CD4-positive, alpha-beta memory T cell (primary cell): ENCODE measurements at regions of chr13 and their contacts with region 1.

Region 1: DNA sequence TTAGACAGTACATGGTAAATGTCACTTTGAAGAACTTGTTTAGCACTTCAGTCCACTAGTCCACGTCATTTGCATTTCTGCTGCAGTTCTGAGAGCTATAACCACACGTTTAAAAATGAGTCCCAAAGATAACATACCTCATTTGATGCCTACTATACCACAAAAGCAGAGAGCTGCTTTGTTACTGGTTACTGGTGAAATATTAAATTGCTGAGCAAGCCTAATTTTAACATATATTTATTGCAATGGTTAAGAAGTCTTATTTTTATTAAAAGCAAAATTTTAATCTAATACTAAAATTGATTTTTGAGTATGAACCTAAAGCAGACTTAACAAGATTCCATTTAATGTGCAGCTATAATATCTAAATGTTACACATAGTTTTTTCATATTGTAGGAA is 1949.7 kb upstream of the PRR20A start:
- DNase-seq: no peak
- H3K4me3 ChIP-seq: no peak overlapping the region
- H3K4me3 Mint-ChIP-seq: no peak overlapping the region
- H3K27ac ChIP-seq: no peak overlapping the region
- H3K27ac Mint-ChIP-seq: no peak overlapping the region
- H3K4me1 ChIP-seq: no peaks in the 10 kb centered on the region
- H3K4me1 Mint-ChIP-seq: no peaks in the 10 kb centered on the region
- H3K27me3 ChIP-seq: no peaks in the 10 kb centered on the region
- H3K27me3 Mint-ChIP-seq: no peaks in the 10 kb centered on the region

Region 2: DNA sequence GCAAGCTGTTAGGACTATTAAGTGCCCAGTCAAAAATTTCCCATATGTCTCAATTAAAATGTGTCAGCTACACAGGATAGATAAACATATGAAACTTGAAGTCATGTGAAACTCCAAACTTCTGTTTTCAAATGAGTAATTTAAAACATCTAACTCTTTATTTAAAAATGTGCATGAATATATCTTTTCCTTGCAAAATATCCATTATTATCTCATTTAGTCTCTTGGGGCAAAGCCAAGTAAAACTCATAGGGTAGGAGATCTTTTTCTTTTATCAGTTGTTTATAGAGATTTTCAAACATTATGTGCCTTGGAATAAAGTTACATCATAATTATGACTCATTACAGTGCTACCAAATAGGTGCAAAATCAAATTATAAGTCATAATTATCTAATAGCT is 70.4 kb before region 1 on chr13:
- CTCF ChIA-PET with region 1: no interaction called
- POLR2A ChIA-PET with region 1: no interaction called
- intact Hi-C with region 1: loop called (anchors 10 kb)
- DNase-seq: no peak
- H3K4me3 ChIP-seq: no peak overlapping the region
- H3K4me3 Mint-ChIP-seq: no peak overlapping the region
- H3K27ac ChIP-seq: no peak overlapping the region
- H3K27ac Mint-ChIP-seq: no peak overlapping the region
- H3K4me1 ChIP-seq: no peaks in the 10 kb centered on the region
- H3K4me1 Mint-ChIP-seq: no peaks in the 10 kb centered on the region
- H3K27me3 ChIP-seq: no peaks in the 10 kb centered on the region
- H3K27me3 Mint-ChIP-seq: no peaks in the 10 kb centered on the region

Region 3: DNA sequence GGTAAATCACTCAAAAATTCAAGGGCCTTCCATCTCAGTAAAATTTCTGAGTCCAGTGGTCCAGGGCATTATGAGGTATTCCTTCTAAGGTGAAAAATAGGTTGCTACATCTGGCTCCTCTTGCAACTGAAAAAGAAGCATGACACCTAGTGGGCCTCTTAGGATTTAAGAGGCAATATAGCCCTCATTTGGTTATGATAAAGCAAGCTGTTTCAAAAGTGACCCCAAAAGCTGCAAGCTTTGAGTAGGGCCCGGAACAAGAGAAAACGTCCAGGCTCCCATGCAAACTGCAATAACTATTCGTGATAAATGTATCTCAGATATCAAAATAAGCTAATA is 39.5 kb after region 1 on chr13:
- CTCF ChIA-PET with region 1: no interaction called
- POLR2A ChIA-PET with region 1: no interaction called
- intact Hi-C with region 1: loop called (anchors 10 kb)
- DNase-seq: no peak
- H3K4me3 ChIP-seq: no peak overlapping the region
- H3K4me3 Mint-ChIP-seq: no peak overlapping the region
- H3K27ac ChIP-seq: no peak overlapping the region
- H3K27ac Mint-ChIP-seq: no peak overlapping the region
- H3K4me1 ChIP-seq: no peaks in the 10 kb centered on the region
- H3K4me1 Mint-ChIP-seq: no peaks in the 10 kb centered on the region
- H3K27me3 ChIP-seq: no peaks in the 10 kb centered on the region
- H3K27me3 Mint-ChIP-seq: no peaks in the 10 kb centered on the region